ENCODE measurements at regions of chr15 and their contacts with region 1.

Region 1: DNA sequence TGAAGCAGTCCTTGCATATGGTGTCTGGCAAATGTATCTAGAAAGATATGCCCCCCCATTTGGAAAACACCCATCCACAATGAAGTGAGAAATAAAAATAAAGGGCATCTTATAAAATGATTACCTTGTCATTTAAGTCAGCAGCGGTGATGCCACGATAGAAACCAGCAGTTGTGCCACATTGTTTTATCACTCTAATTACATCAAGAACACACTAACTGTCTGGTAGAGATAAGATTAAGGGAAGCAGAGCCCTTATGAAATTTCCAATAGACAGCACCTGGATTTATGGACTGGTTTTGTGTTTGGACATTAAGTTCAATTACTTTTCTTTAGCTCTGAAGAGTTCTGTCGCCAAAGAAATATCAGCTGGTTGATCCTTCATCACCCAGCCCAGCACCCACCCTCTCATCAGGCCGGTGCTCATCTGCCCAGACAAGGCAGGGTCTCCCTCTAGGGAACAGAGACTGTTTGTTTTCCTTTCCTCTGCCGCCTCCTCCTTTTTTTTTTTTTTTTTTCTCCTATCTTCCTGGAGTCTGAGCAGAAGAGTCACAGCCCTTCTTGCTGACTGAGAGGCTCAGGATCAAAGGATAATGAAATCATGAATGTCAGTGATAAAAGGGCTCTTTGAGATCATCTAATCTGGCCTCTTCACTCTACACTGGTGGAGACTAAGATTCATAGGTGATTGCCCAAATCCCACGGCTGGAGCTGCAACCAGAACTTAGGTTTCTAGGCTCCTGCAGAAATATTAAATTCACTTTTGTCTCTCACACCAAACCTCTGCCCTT is 464.1 kb downstream of the NTRK3 start:
- DNase-seq: no peak
- H3K4me3 ChIP-seq: no peak overlapping the region
- H3K27ac ChIP-seq: no peak overlapping the region
- H3K4me1 ChIP-seq: no peaks in the 10 kb centered on the region
- H3K27me3 ChIP-seq: no peaks in the 10 kb centered on the region
- CTCF ChIP-seq: no peak

Region 2: DNA sequence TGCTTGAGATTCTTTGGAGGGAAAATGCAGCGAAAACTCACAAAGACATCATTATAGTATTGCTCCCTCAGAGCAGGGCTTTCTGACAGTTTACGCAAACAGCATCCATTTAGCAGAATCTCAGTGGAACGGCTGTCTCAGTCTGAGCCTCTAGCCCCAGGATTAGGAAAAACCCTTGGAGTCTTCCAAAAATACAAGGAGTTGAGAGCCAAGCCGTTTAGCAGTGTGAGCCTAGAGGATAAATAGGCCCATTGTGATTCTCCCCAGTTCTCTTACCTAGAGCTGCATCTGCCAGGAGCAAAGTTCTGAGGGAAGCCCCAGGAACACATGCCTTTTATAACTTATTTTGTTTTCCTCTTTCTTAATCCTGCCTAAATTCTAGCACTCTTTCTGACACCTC is 104.5 kb after region 1 on chr15:
- CTCF ChIA-PET with region 1: no interaction called
- dilution Hi-C with region 1: loop called (anchors 5 kb)
- in situ Hi-C with region 1: no loop called
- intact Hi-C with region 1: no loop called
- DNase-seq: no peak
- H3K4me3 ChIP-seq: no peak overlapping the region
- H3K27ac ChIP-seq: no peak overlapping the region
- H3K4me1 ChIP-seq: no peaks in the 10 kb centered on the region
- H3K27me3 ChIP-seq: no peaks in the 10 kb centered on the region
- CTCF ChIP-seq: no peak

Measured in mammary epithelial cell (primary cell).